HEK293 (cell line): ENCODE measurements at regions of chr13 and their contacts with region 1.

Region 1: GRCh38 chr13:91247768-91248167 is 99.7 kb upstream of the MIR17HG start:
- H3K4me3 ChIP-seq: no peak overlapping the region
- H3K27ac ChIP-seq: no peak overlapping the region
- H3K4me1 ChIP-seq: no peaks in the 10 kb centered on the region
- CTCF ChIP-seq: no peak

Region 2: DNA sequence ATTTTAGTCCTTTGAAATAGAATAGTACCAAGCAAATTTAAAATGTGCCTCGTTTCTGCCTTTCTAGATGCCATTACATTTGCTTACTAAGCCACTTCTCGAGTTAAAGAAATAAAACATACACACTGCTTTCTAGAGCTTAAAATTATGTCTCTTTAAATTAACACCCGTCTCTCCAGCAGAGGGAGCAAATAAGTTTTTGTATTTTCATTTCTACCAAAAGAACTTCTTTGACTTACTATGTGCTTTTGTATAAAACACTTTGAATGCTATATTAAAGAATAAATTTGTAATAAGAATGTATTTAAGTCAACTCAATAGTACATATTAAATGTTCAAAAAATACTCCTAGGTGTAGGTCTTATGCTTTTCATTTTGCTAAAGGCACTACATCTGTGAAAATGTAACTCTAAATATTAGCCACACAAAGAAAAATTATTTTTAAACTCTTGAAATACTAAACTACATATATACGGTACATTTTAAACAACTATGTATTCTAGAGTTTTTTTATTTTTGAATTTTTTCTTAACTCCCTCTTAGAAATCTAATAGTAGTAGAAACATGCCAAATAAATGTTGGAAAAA is 169.6 kb before region 1 on chr13:
- CTCF ChIA-PET with region 1: interaction called, 15 read pairs
- POLR2A ChIA-PET with region 1: no interaction called
- H3K4me3 ChIP-seq: no peak overlapping the region
- H3K27ac ChIP-seq: no peak overlapping the region
- H3K4me1 ChIP-seq: no peaks in the 10 kb centered on the region
- CTCF ChIP-seq: no peak